ENCODE measurements at regions of chr1 and their contacts with region 1.

Region 1: DNA sequence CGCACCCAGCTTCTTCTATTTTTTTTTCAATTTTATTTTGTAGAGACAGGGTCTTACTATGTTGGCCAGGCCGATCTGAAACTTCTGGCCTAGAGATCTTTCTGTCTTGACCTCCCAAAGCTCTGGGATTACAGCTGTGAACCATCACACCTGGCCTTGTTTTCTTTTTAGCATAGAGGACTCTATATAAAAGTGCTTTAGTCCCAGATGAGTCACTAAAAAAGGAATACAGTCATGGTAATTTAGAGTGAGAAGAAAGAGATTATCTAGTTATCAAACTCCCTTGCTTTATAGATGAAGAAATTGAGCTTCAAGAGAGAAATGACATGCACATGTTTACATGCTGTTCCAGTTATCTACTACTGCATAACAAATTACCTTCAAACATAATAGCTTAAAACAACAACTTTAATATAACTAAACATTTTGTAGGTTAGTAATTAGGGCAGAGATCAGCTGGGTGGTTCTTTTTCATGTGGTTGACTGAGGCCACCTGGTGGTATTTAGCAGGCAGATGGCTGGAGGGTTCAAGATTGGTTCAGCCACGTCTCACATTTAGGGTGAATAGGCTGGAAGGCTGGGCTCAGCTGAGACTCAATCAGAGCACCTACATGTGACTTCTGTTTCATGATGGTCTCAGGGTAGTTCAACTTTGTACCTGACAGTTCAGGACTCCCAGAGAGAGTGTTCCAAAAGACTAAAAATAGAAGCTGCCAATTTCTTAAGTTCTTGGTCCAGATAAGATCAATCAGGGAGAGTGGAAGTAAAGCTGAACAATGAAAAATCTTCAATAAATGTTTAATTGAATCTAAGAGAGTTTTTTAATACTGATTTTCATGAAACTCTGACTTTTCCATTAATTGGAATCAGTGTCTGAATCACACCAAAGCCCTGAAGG is 16.9 kb upstream of the MTF2 start:
- DNase-seq: no peak
- ATAC-seq: peak; percentile 49 to 70 (median 61)
- H3K4me3 ChIP-seq: no peak overlapping the region
- H3K27ac ChIP-seq: no peak overlapping the region
- H3K4me1 ChIP-seq: no peaks in the 10 kb centered on the region
- H3K27me3 ChIP-seq: no peaks in the 10 kb centered on the region
- CTCF ChIP-seq: peak; percentile 36

Region 2: DNA sequence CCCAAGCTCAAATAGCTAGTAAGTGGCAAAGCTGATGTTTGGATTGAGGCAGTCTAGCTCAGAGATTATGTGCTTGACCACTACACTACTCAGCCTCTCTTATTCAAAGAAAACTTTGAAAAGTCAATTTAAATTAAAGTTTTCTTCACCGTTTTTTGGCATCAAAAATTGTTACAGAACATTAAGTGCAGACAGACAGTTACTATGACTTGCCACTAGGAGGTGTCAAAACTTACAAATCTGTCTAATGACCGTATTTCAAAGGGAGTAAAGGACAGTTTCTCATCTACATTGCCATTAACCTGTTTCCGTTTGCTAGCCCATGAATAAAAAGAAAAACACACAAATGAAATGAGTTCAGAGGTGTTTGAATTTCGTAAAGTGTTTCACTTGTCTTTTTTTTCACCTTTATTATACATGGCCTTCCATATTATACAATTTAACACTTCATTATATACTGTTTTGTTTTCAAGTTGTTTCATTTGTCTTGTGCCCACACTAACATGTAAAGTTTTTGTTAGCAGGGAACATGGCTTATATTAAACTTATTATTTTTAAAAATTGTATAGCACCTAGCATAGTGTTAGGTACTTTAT is 40.5 kb before region 1 on chr1:
- intact Hi-C with region 1: loop called (anchors 5 kb)
- DNase-seq: no peak
- ATAC-seq: peak; percentile 43 to 84 (median 66)
- H3K4me3 ChIP-seq: no peak overlapping the region
- H3K27ac ChIP-seq: no peak overlapping the region
- H3K4me1 ChIP-seq: peaks cover 11% of the 10 kb centered on the region
- H3K27me3 ChIP-seq: no peaks in the 10 kb centered on the region
- CTCF ChIP-seq: peak; percentile 78

Measured in psoas muscle (tissue), 8 donors.